Posterior cingulate gyrus (tissue), 11 donors: ENCODE measurements at regions of chr16 and their contacts with region 1.

Region 1: GRCh38 chr16:50548125-50548908 is at the start of gene NKD1:
- DNase-seq: peak; percentile 33 to 96 (median 69)

Region 2: GRCh38 chr16:50585331-50585776 is 37.0 kb after region 1 on chr16:
- intact Hi-C with region 1: loop called (anchors 5 kb)
- DNase-seq: peak in 8 of 10 donors; percentile 26 to 91 (median 56)

Region 3: DNA sequence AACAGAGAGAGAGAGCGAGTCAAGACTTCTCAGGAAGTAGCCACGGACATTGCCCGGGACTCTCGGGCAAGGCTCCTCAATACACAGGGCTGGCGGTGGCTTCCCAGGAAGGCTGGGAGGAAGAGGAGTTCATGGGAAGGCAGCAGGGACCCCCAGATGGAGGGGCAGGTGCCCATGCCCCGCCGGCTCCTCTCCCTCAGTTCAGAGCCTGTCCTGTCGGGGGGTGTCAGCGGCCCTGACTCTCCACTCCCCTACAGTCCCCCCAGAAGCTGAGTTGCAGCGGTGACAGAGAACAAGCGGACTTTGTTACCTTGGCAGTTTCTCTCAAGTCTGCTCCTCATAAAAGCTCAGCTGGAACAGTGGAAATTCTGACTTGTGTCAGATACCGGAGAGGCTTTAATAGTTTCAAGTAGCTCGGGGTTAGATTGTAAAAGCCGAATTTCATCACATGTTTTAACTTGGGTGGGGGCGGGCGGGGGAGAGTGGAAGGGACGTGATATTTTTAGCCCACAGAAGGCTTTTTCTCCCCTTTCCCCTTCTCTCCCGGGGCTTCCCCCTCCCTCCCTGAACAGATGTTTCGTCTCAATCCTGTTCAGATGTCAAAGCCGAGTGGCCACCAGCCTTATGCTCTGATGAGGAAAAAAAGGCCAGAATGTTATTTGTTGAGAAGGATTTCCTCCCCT is 65.1 kb after region 1 on chr16:
- intact Hi-C with region 1: no loop called
- DNase-seq: peak in 1 of 10 donors; percentile 50

Region 4: DNA sequence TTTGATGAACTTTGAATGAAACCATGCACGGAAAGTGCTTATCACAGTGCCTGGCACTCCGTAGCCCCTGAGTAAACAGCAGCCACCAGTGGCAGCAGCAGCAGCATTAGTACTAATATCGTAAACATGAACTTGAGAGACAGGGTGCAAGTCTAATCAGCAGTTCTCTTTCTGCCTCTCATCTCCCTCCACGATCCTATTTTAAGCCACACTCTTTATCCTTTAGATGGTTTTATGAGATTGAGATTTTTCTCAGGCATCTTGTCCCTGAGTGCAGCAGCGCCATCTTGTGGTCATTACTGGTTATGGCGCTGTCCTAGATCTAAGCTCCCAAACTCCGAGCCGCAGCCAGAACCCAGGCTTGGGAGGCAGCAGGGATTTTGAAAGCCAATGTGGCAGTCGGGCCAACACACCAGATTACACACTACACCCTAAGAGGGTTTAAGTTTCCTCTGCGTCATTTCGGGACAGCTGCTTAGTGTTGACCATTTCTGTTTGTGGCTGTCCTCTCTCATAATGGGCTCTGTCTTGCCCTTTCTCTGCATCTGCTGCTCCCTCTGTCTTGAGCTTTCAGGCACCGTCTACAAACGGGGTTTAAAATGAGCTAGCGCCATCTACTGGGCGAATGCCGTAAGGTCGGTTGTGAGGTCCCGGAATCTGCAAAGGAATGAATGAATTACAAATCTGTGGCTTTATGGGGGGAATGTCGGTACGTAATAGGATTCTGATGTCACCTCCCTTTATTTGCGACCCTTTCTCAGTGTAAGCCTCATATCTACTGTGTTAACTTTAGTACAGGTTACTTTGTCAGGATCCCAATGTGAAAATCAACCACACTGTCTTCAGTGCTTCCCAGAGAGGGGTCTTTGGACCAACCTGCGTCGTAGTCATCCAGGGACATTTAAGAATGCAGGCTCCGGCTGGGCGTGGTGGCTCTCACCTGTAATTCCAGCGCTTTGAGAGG is 258.1 kb after region 1 on chr16:
- intact Hi-C with region 1: loop called (anchors 10 kb)
- DNase-seq: peak; percentile 73 to 97 (median 88)